ENCODE measurements at regions of chr9 and their contacts with region 1.

Region 1: DNA sequence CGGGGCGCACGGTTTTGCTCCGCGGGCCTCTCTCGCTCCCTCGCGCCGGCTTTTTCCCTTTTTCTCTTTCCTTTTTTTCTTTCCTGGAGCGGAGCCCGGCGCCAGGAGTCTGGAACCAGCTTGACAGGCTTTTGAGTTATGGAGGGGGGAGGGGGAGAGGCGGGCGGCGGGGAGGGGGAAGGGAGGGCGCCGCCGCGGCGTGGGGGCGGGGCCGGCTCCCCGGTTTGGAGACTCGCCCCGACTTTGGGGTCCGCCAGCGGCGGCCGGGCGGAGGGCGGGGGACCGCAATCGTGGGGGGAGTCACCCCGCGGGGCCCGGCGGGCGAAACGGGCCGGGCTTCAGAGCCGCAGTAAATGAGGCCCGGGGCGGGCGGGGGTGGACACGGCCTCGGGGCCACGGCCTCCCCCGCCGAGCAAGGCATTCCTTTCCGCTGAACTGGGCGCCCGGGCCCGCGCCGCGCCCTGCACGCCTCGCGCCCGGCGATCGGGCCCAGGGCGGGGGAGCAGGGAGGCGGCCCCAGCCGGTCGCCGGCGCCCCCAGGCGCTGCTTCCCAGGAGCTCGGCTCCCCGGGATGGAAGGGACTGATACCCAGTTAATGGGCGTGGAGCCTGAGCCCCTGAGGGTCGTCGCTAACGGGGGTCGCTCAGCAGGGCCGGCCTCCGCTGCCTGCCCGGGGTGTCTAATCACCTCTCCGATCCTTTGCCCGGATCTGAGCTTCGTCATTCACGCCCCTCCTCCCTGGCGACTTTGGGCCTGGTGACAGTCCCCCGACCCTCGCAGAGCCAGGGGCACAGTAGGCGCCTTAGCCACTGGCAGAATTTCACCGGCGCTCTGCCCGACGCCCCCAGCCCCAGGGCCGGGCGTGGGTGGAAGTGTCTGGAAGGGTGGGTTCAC is 138.1 kb downstream of the C9orf50 start:
- DNase-seq: peak; percentile 84 to 88
- H3K4me3 ChIP-seq: peak overlapping the region; percentile 36
- H3K4me3 Mint-ChIP-seq: peak overlapping the region; percentile 82
- H3K27ac Mint-ChIP-seq: peak overlapping the region; percentile 92
- H3K4me1 ChIP-seq: peaks cover 81% of the 10 kb centered on the region
- H3K4me1 Mint-ChIP-seq: peaks cover 68% of the 10 kb centered on the region
- H3K27me3 ChIP-seq: no peaks in the 10 kb centered on the region
- H3K27me3 Mint-ChIP-seq: no peaks in the 10 kb centered on the region
- CTCF ChIP-seq: no peak

Region 2: DNA sequence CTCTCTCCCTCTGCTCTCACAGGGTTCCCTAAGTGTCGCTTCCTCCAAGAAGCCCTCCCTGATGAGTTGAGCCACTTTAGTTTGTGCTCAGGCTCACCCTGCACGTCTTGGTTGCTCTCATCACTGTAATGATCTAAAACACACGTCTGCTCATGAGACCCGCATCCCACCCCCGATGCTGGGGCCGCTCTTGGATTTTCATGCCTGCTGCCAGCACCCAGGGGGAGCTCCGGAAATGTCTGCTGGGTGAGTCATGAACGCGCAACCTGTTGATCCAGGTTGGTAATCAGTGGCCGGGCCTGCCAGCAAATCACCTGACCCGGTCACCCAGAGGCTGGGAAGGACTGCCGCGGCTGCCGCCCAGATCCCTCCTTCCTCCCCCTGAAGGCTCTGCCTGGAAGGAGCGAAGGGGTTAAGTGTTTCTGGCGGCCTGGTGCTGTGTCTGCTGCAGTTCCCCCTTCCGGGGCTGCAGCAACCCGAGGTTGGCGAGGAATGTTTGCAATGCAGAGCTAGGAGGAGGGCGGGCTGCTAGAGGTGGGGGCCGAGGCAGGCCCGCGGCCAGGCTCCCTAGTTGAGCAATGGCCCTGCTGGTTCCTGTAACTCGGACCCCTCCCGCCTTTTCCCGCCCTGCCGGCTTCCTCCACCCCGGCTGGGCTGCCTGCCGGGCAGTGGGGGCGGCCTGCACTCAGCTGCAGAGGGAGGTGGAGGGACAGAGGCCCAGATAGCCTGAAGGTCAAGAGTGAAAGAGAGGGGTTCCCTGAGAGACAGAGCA is 148.6 kb before region 1 on chr9:
- CTCF ChIA-PET with region 1: interaction called, 3 read pairs
- POLR2A ChIA-PET with region 1: interaction called, 5 read pairs
- intact Hi-C with region 1: loop called (anchors 2 kb)
- DNase-seq: peak; percentile 97 to 99
- H3K4me3 ChIP-seq: peak overlapping the region; percentile 11
- H3K4me3 Mint-ChIP-seq: peak overlapping the region; percentile 68
- H3K27ac Mint-ChIP-seq: peak overlapping the region; percentile 98
- H3K4me1 ChIP-seq: peaks cover 27% of the 10 kb centered on the region
- H3K4me1 Mint-ChIP-seq: peaks cover 19% of the 10 kb centered on the region
- H3K27me3 ChIP-seq: no peaks in the 10 kb centered on the region
- H3K27me3 Mint-ChIP-seq: no peaks in the 10 kb centered on the region
- CTCF ChIP-seq: peak; percentile 22 to 31

Region 3: GRCh38 chr9:129413537-129414376 is 69.0 kb before region 1 on chr9:
- CTCF ChIA-PET with region 1: no interaction called
- POLR2A ChIA-PET with region 1: interaction called, 3 read pairs
- intact Hi-C with region 1: loop called (anchors 2 kb)
- DNase-seq: peak; percentile 98 to 99
- H3K4me3 ChIP-seq: peak overlapping the region; percentile 52
- H3K4me3 Mint-ChIP-seq: peak overlapping the region; percentile 73
- H3K27ac Mint-ChIP-seq: peak overlapping the region; percentile 95
- H3K4me1 ChIP-seq: peaks cover 46% of the 10 kb centered on the region
- H3K4me1 Mint-ChIP-seq: peaks cover 13% of the 10 kb centered on the region
- H3K27me3 ChIP-seq: no peaks in the 10 kb centered on the region
- H3K27me3 Mint-ChIP-seq: no peaks in the 10 kb centered on the region
- CTCF ChIP-seq: no peak

Region 4: DNA sequence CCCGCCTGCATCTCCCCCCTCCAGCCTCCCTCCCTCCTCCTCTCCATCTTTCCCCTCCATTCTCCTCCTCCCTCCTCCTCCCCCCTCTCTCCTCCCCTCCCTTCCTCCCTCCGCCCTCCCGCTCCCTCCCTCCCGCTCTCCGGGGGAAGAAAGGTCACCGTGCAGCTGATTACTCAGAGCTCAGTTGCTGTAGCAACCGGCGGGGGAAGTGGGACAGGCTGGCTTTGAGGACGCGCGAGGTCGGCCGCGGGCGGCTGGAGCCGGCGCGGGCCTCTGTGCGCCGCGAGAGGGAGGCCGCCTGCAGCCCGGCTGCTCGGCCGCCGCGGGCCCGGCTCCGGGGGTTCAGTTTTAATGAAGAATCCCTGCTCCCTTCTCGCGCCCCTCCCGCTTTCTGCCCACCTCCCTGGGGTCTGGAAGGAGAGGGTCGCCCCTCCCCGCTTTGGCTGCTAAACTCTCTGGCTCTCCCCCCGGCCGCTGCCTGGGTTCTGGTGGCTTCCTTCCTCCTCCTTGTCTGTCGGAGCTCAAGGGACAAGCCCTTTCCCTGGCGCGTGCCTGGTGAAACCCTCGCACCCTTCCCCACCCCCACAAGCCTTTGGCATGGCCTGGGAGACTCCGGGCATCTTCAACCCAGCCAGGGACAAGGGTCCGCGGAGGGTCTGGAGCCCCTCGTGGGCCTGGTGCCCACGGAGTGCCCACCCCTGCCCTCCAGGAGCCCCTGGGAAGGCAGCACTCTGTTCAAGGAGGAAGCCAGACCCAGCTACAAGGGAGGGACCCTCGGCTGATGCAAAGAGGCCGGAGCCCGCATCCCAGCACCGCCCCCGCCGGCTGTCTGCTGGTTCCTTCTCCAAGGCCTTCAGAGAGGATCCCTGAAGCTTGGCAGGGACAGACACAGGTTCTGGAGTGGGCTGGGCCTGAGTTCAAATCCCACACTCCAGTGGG is 22.2 kb before region 1 on chr9:
- CTCF ChIA-PET with region 1: interaction called, 6 read pairs
- POLR2A ChIA-PET with region 1: interaction called, 32 read pairs
- intact Hi-C with region 1: loop called (anchors 1 kb)
- DNase-seq: peak; percentile 95 to 98
- H3K4me3 ChIP-seq: peak overlapping the region; percentile 29
- H3K4me3 Mint-ChIP-seq: peak overlapping the region; percentile 82
- H3K27ac Mint-ChIP-seq: peak overlapping the region; percentile 97
- H3K4me1 ChIP-seq: peaks cover 34% of the 10 kb centered on the region
- H3K4me1 Mint-ChIP-seq: no peaks in the 10 kb centered on the region
- H3K27me3 ChIP-seq: no peaks in the 10 kb centered on the region
- H3K27me3 Mint-ChIP-seq: no peaks in the 10 kb centered on the region
- CTCF ChIP-seq: no peak

Region 5: DNA sequence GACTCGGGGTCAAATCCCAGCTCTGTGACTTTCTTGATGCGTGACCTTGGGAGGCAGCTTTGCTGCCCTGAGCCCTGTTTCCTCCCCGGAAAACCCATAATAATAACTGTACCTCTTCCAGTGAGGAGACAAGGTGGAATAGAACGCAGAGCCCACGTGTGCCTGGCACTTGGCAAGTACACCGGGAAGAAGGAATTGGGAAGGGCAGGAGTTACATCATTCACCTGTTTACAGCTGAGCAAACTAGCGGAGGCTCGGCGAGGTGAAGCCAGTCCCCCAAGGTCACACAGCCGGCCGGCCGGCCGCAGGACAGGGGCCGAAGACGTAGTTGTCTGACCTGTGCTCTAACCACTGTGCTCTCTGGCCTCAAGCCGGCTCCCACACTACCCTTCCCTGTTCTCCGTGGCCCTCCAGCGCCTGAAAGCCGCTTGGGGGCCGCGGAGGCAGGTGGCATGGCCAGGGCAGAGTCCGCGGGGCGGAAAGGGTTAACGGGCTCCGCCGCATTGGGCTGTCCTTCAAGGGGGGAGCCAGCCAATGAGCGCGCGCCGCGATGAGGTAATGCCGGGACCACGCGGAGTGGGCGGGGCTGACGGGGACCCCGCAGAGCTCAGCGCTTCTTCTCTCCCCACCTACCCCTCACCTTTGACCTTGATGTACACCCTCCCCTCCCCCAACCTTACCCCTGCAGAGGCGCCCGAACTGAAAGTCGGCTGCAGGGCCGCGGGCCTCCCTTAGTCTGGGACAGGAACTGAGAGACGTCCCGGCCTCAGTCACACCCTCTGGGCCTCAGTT is 13.0 kb after region 1 on chr9:
- CTCF ChIA-PET with region 1: interaction called, 4 read pairs
- POLR2A ChIA-PET with region 1: interaction called, 26 read pairs
- intact Hi-C with region 1: no loop called
- DNase-seq: peak; percentile 96 to 98
- H3K4me3 ChIP-seq: peak overlapping the region; percentile 50
- H3K4me3 Mint-ChIP-seq: peak overlapping the region; percentile 75
- H3K27ac Mint-ChIP-seq: peak overlapping the region; percentile 79
- H3K4me1 ChIP-seq: peaks cover 53% of the 10 kb centered on the region
- H3K4me1 Mint-ChIP-seq: peaks cover 49% of the 10 kb centered on the region
- H3K27me3 ChIP-seq: no peaks in the 10 kb centered on the region
- H3K27me3 Mint-ChIP-seq: no peaks in the 10 kb centered on the region
- CTCF ChIP-seq: no peak

Region 6: GRCh38 chr9:129511320-129511885 is 28.6 kb after region 1 on chr9:
- CTCF ChIA-PET with region 1: no interaction called
- POLR2A ChIA-PET with region 1: interaction called, 10 read pairs
- intact Hi-C with region 1: no loop called
- DNase-seq: no peak
- H3K4me3 ChIP-seq: no peak overlapping the region
- H3K4me3 Mint-ChIP-seq: no peak overlapping the region
- H3K27ac Mint-ChIP-seq: no peak overlapping the region
- H3K4me1 ChIP-seq: no peaks in the 10 kb centered on the region
- H3K4me1 Mint-ChIP-seq: no peaks in the 10 kb centered on the region
- H3K27me3 ChIP-seq: no peaks in the 10 kb centered on the region
- H3K27me3 Mint-ChIP-seq: no peaks in the 10 kb centered on the region
- CTCF ChIP-seq: no peak

Measured in Caco-2 (cell line).